Sigmoid colon (tissue), 7 donors: ENCODE measurements at regions of chr4 and their contacts with region 1.

Region 1: GRCh38 chr4:110631584-110632505 is 9.0 kb upstream of the PITX2 start:
- DNase-seq: peak; percentile 76
- H3K4me3 ChIP-seq: peak overlapping the region in 2 of 4 donors; percentile 36 to 38
- H3K27ac ChIP-seq: peak overlapping the region in 1 of 4 donors; percentile 91
- H3K4me1 ChIP-seq: peaks cover 0 to 40% (median 27%) of the 10 kb centered on the region in 4 donors
- H3K27me3 ChIP-seq: peaks cover 69 to 100% (median 95%) of the 10 kb centered on the region in 3 donors
- CTCF ChIP-seq: peak; percentile 47 to 71 (median 56)
- EP300 ChIP-seq: no peak
- POLR2A ChIP-seq: no peak

Region 2: DNA sequence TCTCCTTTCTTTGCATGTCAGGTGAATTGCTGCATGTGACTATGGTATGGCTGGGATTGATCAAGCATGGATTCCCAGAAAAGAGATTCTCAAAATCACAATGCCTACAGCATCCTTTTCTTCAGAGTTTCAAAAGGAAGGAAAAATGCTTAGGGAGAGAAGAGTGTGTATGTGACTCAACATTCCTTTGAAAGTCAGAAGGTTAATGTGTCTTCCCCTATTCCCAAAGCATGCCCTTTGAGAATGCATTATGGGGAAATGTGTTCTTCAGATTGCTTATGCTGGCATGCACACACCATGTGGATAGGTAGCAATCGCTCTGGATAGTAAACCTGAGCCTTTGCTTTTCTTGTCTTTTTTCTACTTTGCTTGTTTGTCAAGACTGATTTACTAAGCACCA is 512.0 kb before region 1 on chr4:
- intact Hi-C with region 1: no loop called
- DNase-seq: no peak
- H3K4me3 ChIP-seq: no peak overlapping the region
- H3K27ac ChIP-seq: no peak overlapping the region
- H3K4me1 ChIP-seq: no peaks in the 10 kb centered on the region
- H3K27me3 ChIP-seq: no peaks in the 10 kb centered on the region
- CTCF ChIP-seq: no peak
- EP300 ChIP-seq: no peak
- POLR2A ChIP-seq: no peak

Region 3: DNA sequence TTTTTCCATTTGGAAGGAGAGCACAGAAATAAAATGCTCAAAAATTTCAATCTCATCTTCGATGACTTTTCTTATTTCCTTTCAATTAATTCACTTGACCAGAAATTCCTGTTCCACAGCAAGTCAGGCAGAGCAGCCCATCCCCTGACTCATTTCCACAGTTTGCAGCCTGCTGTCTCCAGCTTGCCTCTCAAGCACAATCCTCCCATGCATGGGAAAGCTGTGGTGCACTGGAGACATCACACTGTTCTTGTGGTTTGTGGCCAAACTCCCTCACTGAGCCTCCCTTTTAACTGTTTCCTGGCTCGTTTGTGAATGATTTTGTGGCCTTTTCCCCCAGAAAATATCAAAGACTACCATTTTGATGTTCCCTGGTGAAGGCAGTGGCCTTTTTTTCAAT is 269.9 kb before region 1 on chr4:
- intact Hi-C with region 1: no loop called
- DNase-seq: no peak
- H3K4me3 ChIP-seq: no peak overlapping the region
- H3K27ac ChIP-seq: no peak overlapping the region
- H3K4me1 ChIP-seq: no peaks in the 10 kb centered on the region
- H3K27me3 ChIP-seq: no peaks in the 10 kb centered on the region
- CTCF ChIP-seq: no peak
- EP300 ChIP-seq: no peak
- POLR2A ChIP-seq: no peak

Region 4: GRCh38 chr4:110787109-110787508 is 155.3 kb after region 1 on chr4:
- intact Hi-C with region 1: no loop called
- DNase-seq: no peak
- H3K4me3 ChIP-seq: no peak overlapping the region
- H3K27ac ChIP-seq: no peak overlapping the region
- H3K4me1 ChIP-seq: no peaks in the 10 kb centered on the region
- H3K27me3 ChIP-seq: no peaks in the 10 kb centered on the region
- CTCF ChIP-seq: no peak
- EP300 ChIP-seq: no peak
- POLR2A ChIP-seq: no peak

Region 5: DNA sequence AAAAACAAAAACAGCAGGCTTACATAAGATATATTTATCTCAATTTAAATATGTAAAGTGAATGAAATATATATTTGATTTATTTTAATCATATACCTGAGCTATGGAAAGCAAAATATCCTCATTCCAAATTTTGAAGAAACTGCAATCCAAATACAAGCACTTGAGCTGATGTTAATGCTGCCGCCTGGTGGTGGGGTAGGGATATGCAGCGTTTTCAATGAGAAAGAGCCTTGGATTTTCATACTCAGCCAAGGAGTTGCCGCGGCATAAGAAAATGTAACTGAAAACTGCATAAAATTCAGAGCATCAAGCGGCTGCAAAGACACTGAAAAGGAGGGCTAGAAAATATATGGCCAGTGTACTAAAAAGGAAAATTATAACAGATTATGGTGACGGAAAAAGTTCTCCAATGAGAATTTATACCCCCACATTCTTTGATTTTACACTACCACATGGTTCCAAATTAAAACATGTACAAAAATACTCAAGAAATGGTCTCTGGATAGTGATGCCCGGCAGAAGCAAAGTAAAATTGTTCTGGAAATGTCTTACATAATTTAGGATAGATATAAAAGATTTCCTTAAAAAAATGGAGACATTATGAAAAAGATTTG is 651.3 kb after region 1 on chr4:
- intact Hi-C with region 1: loop called (anchors 2 kb)
- DNase-seq: peak; percentile 52
- H3K4me3 ChIP-seq: no peak overlapping the region
- H3K27ac ChIP-seq: no peak overlapping the region
- H3K4me1 ChIP-seq: no peaks in the 10 kb centered on the region
- H3K27me3 ChIP-seq: peaks cover 0 to 7% (median 0%) of the 10 kb centered on the region in 3 donors
- CTCF ChIP-seq: peak in 3 of 4 experiments; percentile 50 to 74 (median 65)
- EP300 ChIP-seq: no peak
- POLR2A ChIP-seq: no peak

Region 6: DNA sequence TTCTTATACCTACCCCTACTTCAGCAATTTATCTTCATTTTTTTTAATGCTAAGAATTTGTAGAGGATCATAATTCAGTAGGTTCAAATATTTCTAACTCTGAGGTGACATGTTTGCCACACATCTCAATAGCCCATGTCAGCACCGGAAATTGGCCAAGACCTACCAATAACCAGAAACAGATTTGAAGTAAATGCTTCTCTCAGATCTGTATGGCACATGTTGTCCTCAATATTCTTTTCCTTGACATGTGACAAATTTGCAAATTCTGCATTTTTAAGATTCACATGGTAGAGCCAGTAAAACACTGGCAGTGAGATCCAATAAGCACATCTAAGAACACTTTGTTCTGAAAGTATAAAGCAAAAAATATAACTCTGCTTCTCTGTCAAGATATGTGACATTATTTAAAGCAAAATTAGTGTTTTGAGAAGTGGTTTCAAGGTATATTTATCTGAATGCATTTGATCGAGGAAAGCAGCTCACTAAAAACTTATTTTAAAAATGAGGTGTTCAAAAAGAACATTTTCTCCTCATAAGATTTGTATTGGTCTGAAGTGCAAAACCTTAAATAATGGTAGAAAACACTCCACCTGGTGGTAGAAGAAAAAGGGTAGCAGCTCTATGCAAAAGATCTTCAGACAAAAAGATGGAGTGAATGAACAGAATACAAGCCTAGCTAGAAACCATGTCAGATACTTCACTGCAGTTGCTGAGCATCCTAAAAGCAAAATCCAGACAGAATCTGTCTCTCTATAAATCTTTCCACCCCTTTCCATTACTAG is 999.6 kb after region 1 on chr4:
- intact Hi-C with region 1: loop called (anchors 5 kb)
- DNase-seq: no peak
- H3K4me3 ChIP-seq: no peak overlapping the region
- H3K27ac ChIP-seq: no peak overlapping the region
- H3K4me1 ChIP-seq: no peaks in the 10 kb centered on the region
- H3K27me3 ChIP-seq: peaks cover 0 to 13% (median 0%) of the 10 kb centered on the region in 3 donors
- CTCF ChIP-seq: no peak
- EP300 ChIP-seq: no peak
- POLR2A ChIP-seq: no peak